CD4-positive, alpha-beta T cell (primary cell): ENCODE measurements at regions of chr5 and their contacts with region 1.

Region 1: DNA sequence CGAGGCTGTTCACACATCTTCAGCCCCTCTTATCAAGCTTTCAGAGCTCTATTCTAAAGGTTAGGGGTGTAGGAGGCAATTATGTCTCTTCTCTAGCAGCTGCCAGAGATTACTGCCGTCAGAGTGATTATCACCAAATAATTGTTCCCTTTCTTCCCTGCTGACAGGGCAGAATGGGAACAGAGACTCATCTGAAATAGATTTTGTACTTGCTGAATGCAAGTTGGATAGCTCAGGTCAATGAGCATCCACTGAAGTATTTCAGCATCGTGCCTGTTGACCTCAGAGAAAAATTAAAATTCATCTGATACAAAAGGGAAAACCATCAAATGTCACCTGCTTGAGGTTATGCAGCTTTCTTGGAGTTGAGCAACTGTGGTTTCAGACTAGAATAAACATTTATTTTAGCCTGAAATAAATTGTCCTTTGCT is 213.7 kb upstream of the MAP3K1 start:
- DNase-seq: no peak
- ATAC-seq: no peak
- H3K4me3 ChIP-seq: no peak overlapping the region
- H3K4me3 Mint-ChIP-seq: no peak overlapping the region
- H3K27ac ChIP-seq: no peak overlapping the region
- H3K27ac Mint-ChIP-seq: no peak overlapping the region
- H3K4me1 ChIP-seq: peaks cover 20% of the 10 kb centered on the region
- H3K4me1 Mint-ChIP-seq: peaks cover 70% of the 10 kb centered on the region
- H3K27me3 ChIP-seq: no peaks in the 10 kb centered on the region
- H3K27me3 Mint-ChIP-seq: no peaks in the 10 kb centered on the region
- CTCF ChIP-seq: no peak

Region 2: GRCh38 chr5:56659971-56660370 is 58.3 kb after region 1 on chr5:
- CTCF ChIA-PET with region 1: no interaction called
- POLR2A ChIA-PET with region 1: no interaction called
- intact Hi-C with region 1: loop called in 1 of 2 experiments (anchors 5 kb)
- DNase-seq: no peak
- ATAC-seq: no peak
- H3K4me3 ChIP-seq: no peak overlapping the region
- H3K4me3 Mint-ChIP-seq: no peak overlapping the region
- H3K27ac ChIP-seq: no peak overlapping the region
- H3K27ac Mint-ChIP-seq: no peak overlapping the region
- H3K4me1 ChIP-seq: peaks cover 2% of the 10 kb centered on the region
- H3K4me1 Mint-ChIP-seq: peaks cover 18% of the 10 kb centered on the region
- H3K27me3 ChIP-seq: no peaks in the 10 kb centered on the region
- H3K27me3 Mint-ChIP-seq: no peaks in the 10 kb centered on the region
- CTCF ChIP-seq: no peak